CD8-positive, alpha-beta T cell (primary cell): ENCODE measurements at regions of chr5 and their contacts with region 1.

Region 1: GRCh38 chr5:43066799-43067741 is 27.0 kb upstream of the ANXA2R start:
- DNase-seq: peak; percentile 85 to 94 (median 90)
- ATAC-seq: peak; percentile 43
- H3K4me3 ChIP-seq: peak overlapping the region; percentile 87 to 99
- H3K4me3 Mint-ChIP-seq: peak overlapping the region; percentile 98
- H3K27ac ChIP-seq: peak overlapping the region; percentile 96 to 98
- H3K27ac Mint-ChIP-seq: peak overlapping the region; percentile 100
- H3K4me1 ChIP-seq: peaks cover 18% of the 10 kb centered on the region
- H3K4me1 Mint-ChIP-seq: peaks cover 48% of the 10 kb centered on the region
- H3K27me3 ChIP-seq: no peaks in the 10 kb centered on the region
- H3K27me3 Mint-ChIP-seq: no peaks in the 10 kb centered on the region
- CTCF ChIP-seq: no peak

Region 2: DNA sequence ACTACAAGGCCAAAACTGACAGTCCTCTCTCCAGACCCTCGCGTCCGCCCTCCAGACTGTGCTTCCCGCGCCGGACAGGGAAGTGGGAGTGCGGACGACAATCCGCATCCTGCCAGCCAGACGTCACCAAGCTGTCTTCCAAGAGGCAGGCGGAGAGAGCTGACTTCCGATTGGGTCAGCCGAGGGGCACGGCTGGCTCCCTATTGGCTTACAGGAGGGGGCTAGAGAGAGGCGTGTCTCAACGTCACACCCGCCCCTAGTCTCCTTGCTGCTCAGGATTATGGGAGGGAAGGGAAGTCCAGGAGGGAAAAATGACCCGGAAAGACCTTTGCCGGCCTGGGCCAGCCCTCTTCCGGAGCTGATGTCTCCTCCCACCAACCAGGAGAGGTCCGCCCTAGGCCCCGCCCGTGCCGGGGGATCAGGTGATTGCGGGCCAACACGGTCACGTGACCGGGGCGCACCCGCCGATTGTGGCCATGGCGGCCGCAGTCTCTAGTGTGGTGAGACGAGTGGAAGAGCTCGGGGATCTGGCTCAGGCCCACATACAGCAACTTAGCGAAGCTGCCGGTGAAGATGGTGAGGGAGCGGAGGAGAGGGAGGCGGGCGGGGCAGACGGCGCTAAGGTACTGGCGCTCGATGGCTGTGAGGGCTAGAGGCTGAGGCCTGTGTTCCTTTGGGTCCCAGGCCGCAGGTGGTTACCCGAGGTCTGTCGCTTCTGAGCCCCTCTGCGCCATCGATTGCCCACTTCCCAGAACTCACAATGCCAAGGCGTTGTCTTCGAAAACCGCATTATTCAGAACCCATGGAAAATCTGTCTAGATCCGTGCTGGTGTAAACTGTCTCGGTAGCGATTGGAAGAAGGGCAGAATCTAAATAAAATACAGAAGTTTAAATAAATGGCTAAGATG is 1162.9 kb before region 1 on chr5 and contains the start of gene RIMOC1:
- CTCF ChIA-PET with region 1: no interaction called
- POLR2A ChIA-PET with region 1: interaction called, 4 read pairs
- intact Hi-C with region 1: loop called in 1 of 2 experiments (anchors 10 kb)
- DNase-seq: peak; percentile 94 to 99 (median 97)
- ATAC-seq: peak; percentile 89
- H3K4me3 ChIP-seq: peak within 1 kb of the TSS; percentile 73 to 83
- H3K4me3 Mint-ChIP-seq: peak within 1 kb of the TSS; percentile 99
- H3K27ac ChIP-seq: peak within 1 kb of the TSS; percentile 84 to 91
- H3K27ac Mint-ChIP-seq: peak within 1 kb of the TSS; percentile 100
- H3K4me1 ChIP-seq: peaks cover 17% of the 10 kb centered on the region
- H3K4me1 Mint-ChIP-seq: peaks cover 44% of the 10 kb centered on the region
- H3K27me3 ChIP-seq: no peaks in the 10 kb centered on the region
- H3K27me3 Mint-ChIP-seq: no peaks in the 10 kb centered on the region
- CTCF ChIP-seq: no peak
- total RNA-seq, gene RIMOC1: 9.0 to 9.2 TPM

Region 3: DNA sequence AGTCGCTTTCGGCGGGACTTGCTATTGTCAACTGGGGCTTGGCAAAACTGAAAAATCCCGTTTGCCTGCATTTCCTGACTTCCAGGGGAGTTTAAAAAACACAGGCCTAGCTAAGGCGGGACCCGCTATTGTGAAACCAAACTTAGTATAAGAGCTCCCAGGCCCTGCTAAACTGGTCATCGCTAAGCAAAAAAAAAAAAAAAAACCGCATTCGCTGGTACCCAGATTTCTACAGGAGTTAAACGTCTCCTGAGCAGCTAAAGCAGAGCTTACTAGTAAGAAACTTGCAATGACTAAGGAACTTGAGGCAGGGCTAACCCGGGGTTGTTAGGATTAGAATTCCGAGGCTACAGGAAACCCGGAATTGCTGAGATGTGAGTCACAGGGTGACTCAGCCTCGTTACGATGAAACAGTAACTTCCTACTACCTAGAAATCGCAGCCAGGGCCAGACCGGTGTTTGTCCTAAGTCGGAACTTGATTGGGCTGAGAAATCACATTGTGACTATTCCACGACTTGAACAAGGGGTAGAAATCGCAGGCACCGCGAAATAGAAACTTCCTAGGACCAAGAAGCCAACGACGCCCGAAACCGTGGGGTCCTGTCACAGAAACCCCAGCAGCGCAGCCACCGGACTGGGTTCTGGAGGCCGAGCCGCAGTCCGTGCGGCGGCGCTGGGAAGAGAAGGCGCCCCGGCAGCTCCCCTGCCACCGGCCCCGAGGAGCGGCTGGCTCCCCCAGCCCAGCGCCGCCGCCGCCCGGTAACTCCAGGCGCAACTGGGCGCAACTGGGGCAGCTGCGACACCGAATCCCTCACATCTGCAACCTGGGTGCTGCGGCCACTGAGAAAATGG is 116.4 kb before region 1 on chr5:
- CTCF ChIA-PET with region 1: interaction called, 14 read pairs
- POLR2A ChIA-PET with region 1: interaction called, 81 read pairs
- intact Hi-C with region 1: loop called (anchors 1 kb)
- DNase-seq: peak; percentile 26 to 90 (median 72)
- ATAC-seq: peak; percentile 43
- H3K4me3 ChIP-seq: peak overlapping the region; percentile 72 to 83
- H3K4me3 Mint-ChIP-seq: peak overlapping the region; percentile 94
- H3K27ac ChIP-seq: peak overlapping the region; percentile 93 to 94
- H3K27ac Mint-ChIP-seq: peak overlapping the region; percentile 99
- H3K4me1 ChIP-seq: peaks cover 20% of the 10 kb centered on the region
- H3K4me1 Mint-ChIP-seq: peaks cover 34% of the 10 kb centered on the region
- H3K27me3 ChIP-seq: no peaks in the 10 kb centered on the region
- H3K27me3 Mint-ChIP-seq: no peaks in the 10 kb centered on the region
- CTCF ChIP-seq: no peak

Region 4: GRCh38 chr5:43008369-43009153 is 58.5 kb before region 1 on chr5:
- CTCF ChIA-PET with region 1: interaction called, 5 read pairs
- POLR2A ChIA-PET with region 1: interaction called, 112 read pairs
- intact Hi-C with region 1: loop called (anchors 1 kb)
- DNase-seq: peak; percentile 86 to 97 (median 93)
- ATAC-seq: peak; percentile 63
- H3K4me3 ChIP-seq: peak overlapping the region; percentile 70 to 81
- H3K4me3 Mint-ChIP-seq: peak overlapping the region; percentile 98
- H3K27ac ChIP-seq: peak overlapping the region; percentile 94 to 96
- H3K27ac Mint-ChIP-seq: peak overlapping the region; percentile 96
- H3K4me1 ChIP-seq: peaks cover 25% of the 10 kb centered on the region
- H3K4me1 Mint-ChIP-seq: peaks cover 34% of the 10 kb centered on the region
- H3K27me3 ChIP-seq: no peaks in the 10 kb centered on the region
- H3K27me3 Mint-ChIP-seq: no peaks in the 10 kb centered on the region
- CTCF ChIP-seq: no peak

Region 5: GRCh38 chr5:43040287-43041098 is 26.6 kb before region 1 on chr5 and contains the start of gene ANXA2R:
- CTCF ChIA-PET with region 1: interaction called, 84 read pairs
- POLR2A ChIA-PET with region 1: interaction called, 339 read pairs
- intact Hi-C with region 1: loop called (anchors 1 kb)
- DNase-seq: peak; percentile 88 to 98 (median 93)
- ATAC-seq: peak; percentile 58
- H3K4me3 ChIP-seq: peak within 1 kb of the TSS; percentile 86 to 87
- H3K4me3 Mint-ChIP-seq: peak within 1 kb of the TSS; percentile 93
- H3K27ac ChIP-seq: peak within 1 kb of the TSS; percentile 93 to 94
- H3K27ac Mint-ChIP-seq: peak within 1 kb of the TSS; percentile 98
- H3K4me1 ChIP-seq: peaks cover 27% of the 10 kb centered on the region
- H3K4me1 Mint-ChIP-seq: peaks cover 56% of the 10 kb centered on the region
- H3K27me3 ChIP-seq: no peaks in the 10 kb centered on the region
- H3K27me3 Mint-ChIP-seq: no peaks in the 10 kb centered on the region
- CTCF ChIP-seq: peak; percentile 79
- total RNA-seq, gene ANXA2R: 38.2 to 39.5 TPM

Region 6: GRCh38 chr5:43105369-43106289 is 38.6 kb after region 1 on chr5:
- CTCF ChIA-PET with region 1: interaction called, 45 read pairs
- POLR2A ChIA-PET with region 1: interaction called, 10 read pairs
- intact Hi-C with region 1: loop called (anchors 1 to 5 kb)
- DNase-seq: peak; percentile 81 to 96 (median 91)
- ATAC-seq: peak; percentile 94
- H3K4me3 ChIP-seq: peak overlapping the region; percentile 55 to 56
- H3K4me3 Mint-ChIP-seq: peak overlapping the region; percentile 84
- H3K27ac ChIP-seq: peak overlapping the region in 1 of 2 experiments; percentile 58
- H3K27ac Mint-ChIP-seq: peak overlapping the region; percentile 84
- H3K4me1 ChIP-seq: peaks cover 27% of the 10 kb centered on the region
- H3K4me1 Mint-ChIP-seq: peaks cover 35% of the 10 kb centered on the region
- H3K27me3 ChIP-seq: no peaks in the 10 kb centered on the region
- H3K27me3 Mint-ChIP-seq: no peaks in the 10 kb centered on the region
- CTCF ChIP-seq: peak; percentile 100

Region 7: GRCh38 chr5:43556857-43557542 is 489.9 kb after region 1 on chr5 and contains the start of gene PAIP1:
- CTCF ChIA-PET with region 1: no interaction called
- POLR2A ChIA-PET with region 1: no interaction called
- intact Hi-C with region 1: loop called in 1 of 2 experiments (anchors 1 kb)
- DNase-seq: peak; percentile 67 to 92 (median 83)
- ATAC-seq: peak; percentile 81
- H3K4me3 ChIP-seq: peak within 1 kb of the TSS; percentile 73 to 88
- H3K4me3 Mint-ChIP-seq: peak within 1 kb of the TSS; percentile 90
- H3K27ac ChIP-seq: peak within 1 kb of the TSS; percentile 82 to 93
- H3K27ac Mint-ChIP-seq: peak within 1 kb of the TSS; percentile 97
- H3K4me1 ChIP-seq: peaks cover 45% of the 10 kb centered on the region
- H3K4me1 Mint-ChIP-seq: peaks cover 13% of the 10 kb centered on the region
- H3K27me3 ChIP-seq: no peaks in the 10 kb centered on the region
- H3K27me3 Mint-ChIP-seq: peaks cover 2% of the 10 kb centered on the region
- CTCF ChIP-seq: peak; percentile 77
- total RNA-seq, gene PAIP1: 40.3 to 45.7 TPM

Region 8: GRCh38 chr5:44714871-44715561 is 1647.9 kb after region 1 on chr5:
- CTCF ChIA-PET with region 1: no interaction called
- POLR2A ChIA-PET with region 1: no interaction called
- intact Hi-C with region 1: no loop called
- DNase-seq: no peak
- ATAC-seq: no peak
- H3K4me3 ChIP-seq: no peak overlapping the region
- H3K4me3 Mint-ChIP-seq: no peak overlapping the region
- H3K27ac ChIP-seq: no peak overlapping the region
- H3K27ac Mint-ChIP-seq: no peak overlapping the region
- H3K4me1 ChIP-seq: no peaks in the 10 kb centered on the region
- H3K4me1 Mint-ChIP-seq: no peaks in the 10 kb centered on the region
- H3K27me3 ChIP-seq: no peaks in the 10 kb centered on the region
- H3K27me3 Mint-ChIP-seq: no peaks in the 10 kb centered on the region
- CTCF ChIP-seq: no peak